Activated B cell treated with CpG ODN at 0.5 μM for 24 hours (primary cell): ENCODE measurements at regions of chr21 and their contacts with region 1.

Region 1: GRCh38 chr21:41328660-41329607 is 12.3 kb downstream of the FAM3B start:
- DNase-seq: no peak
- ATAC-seq: no peak
- H3K4me3 Mint-ChIP-seq: no peak overlapping the region
- H3K27ac Mint-ChIP-seq: no peak overlapping the region
- H3K4me1 Mint-ChIP-seq: no peaks in the 10 kb centered on the region
- H3K27me3 Mint-ChIP-seq: peaks cover 5% of the 10 kb centered on the region
- CTCF ChIP-seq: no peak

Region 2: GRCh38 chr21:41443562-41443961 is 114.6 kb after region 1 on chr21:
- CTCF ChIA-PET with region 1: no interaction called
- POLR2A ChIA-PET with region 1: interaction called, 13 read pairs
- intact Hi-C with region 1: no loop called
- DNase-seq: no peak
- ATAC-seq: no peak
- H3K4me3 Mint-ChIP-seq: no peak overlapping the region
- H3K27ac Mint-ChIP-seq: no peak overlapping the region
- H3K4me1 Mint-ChIP-seq: no peaks in the 10 kb centered on the region
- H3K27me3 Mint-ChIP-seq: no peaks in the 10 kb centered on the region
- CTCF ChIP-seq: no peak